Left cardiac atrium (tissue), 4 donors: ENCODE measurements at regions of chr7 and their contacts with region 1.

Region 1: DNA sequence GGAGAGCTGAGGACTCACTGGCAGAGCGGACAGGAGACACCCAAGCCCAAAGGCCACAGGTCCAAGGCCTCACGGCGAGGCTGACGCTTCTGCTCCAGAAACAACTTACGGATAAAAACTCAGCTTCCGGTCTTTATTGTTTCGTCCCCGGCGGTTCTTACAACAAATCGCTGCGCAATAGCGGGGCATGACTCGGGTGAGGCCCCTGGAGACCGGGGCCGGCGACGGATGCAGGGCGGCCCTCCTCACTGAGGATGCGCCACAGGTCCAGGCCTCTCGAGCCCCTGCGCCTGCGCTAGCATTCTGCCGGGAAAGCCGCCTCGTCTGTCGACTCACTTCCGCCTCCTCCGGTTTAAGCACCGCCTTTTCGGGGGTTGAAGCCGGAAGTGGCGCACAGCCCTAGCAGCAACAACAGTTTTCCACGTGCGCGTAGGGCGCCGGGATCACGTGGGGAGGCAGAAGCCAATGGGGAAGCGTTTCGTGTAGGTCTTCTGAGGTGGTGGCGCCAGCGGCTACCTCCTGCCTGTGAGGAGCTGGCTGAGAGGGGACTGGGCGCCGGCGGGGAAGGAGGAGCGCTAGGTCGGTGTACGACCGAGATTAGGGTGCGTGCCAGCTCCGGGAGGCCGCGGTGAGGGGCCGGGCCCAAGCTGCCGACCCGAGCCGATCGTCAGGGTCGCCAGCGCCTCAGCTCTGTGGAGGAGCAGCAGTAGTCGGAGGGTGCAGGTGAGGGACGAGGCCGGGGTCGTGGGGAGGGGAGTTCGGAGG is at the starts of genes DNAJB9 and THAP5:
- DNase-seq: peak; percentile 99
- ATAC-seq: peak; percentile 98
- total RNA-seq, gene DNAJB9: 30.8 to 48.8 TPM
- total RNA-seq, gene THAP5: 21.1 to 24.2 TPM

Region 2: DNA sequence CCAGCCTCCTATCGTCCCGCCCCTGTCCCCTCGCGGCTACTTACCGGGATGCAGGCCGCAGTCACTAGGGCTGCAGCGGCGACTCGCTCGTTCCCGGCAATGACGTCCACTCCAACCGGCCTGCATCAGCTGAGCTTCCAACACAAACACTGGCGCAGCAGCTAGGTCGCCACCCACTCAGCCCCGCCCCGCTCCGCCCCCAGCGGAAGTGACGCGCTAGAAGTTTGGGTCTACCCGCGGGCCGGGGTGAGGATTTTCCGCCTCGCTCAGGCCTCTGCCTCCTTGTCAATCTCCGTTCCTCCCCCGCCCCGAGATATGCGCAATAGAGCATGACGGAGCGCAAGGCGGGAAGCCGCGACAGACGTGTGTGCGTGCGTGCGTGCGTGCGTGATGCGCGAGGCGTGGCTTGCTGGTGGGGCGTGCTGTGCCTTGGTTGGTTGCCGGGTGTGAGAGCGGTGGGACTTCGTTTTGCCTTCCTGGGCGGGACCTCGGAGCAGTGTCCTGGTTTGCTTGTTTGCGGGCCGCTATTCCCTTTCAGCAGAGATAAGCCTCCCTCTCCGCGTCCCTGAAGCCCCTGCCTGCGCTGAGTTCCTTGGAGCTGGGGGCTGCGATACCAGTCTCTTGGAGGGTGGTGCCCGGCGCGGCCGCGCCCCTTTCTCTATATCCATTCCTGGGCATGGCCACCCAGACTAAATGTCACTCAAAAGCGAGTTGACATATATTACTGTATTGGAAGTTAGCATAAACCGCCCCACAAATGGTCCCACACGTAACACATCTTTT is 43.4 kb before region 1 on chr7 and contains the start of gene PNPLA8:
- intact Hi-C with region 1: loop called in 1 of 2 experiments (anchors 1 kb)
- DNase-seq: peak; percentile 100
- ATAC-seq: peak; percentile 96
- total RNA-seq, gene PNPLA8: 28.0 to 34.7 TPM

Region 3: DNA sequence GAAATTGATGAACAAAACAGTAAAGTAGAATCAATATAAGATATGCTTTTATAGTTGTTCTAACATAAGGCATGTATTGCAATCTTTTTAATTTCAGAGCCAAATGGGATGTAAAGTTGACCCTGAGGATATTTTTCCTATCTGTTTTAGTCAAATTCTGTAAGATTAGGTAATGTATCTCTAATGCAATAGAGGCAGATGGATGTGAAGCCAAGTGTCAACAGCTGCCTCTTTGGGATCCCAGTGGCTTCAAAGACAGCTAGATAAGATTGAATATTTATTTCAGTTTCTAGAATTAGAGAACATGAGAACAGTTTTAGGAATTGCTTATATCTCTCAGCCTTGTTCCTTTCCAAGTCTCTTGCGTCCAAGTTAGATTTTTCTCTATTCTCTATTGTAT is 208.4 kb after region 1 on chr7:
- intact Hi-C with region 1: no loop called
- DNase-seq: no peak
- ATAC-seq: no peak